Activated CD4-positive, alpha-beta memory T cell treated with anti-CD3 and anti-CD28 coated beads for 36 hours (primary cell): ENCODE measurements at regions of chr20 and their contacts with region 1.

Region 1: GRCh38 chr20:44747166-44748004 is 1.7 kb downstream of the KCNK15 start:
- DNase-seq: peak; percentile 81
- H3K4me3 Mint-ChIP-seq: peak overlapping the region; percentile 67
- H3K27ac Mint-ChIP-seq: no peak overlapping the region
- H3K4me1 Mint-ChIP-seq: peaks cover 11% of the 10 kb centered on the region
- H3K27me3 Mint-ChIP-seq: peaks cover 18% of the 10 kb centered on the region

Region 2: DNA sequence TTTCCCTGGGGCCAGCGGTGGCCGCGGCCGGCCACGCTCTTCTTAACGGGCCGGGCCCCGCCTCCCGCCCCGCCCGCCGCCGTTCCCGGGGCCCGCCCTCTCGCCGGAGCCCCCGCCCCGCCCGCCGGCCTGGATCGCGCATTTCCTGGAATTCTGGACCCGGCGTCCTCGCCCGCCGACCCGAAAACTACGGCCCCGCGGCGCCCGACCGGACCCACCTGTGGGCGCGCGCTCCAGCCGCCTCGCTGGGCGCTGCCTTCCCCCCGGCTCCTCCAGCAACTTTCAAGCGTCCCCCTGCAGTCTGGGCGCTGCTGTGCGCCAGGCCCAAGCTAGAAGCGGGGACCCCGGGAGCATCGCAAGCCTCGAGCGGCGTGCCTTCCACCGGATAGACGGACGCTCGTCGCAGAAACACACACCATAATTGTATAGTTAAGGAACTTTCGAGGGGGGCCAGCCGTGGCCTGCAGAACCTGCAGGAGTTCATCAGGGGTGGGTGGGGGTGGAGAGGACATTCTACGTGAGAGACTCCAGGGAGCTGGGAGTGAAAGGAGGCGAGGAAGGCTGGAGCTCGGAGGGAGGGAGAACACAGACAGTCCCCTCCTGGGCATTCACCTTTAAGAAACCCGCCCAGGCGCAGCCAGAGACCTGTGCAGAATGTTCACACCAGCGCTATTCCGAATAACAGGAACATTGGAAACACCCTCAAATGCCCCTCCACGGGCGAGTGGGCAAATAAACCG is 95.5 kb before region 1 on chr20 and contains the start of gene ADA:
- CTCF ChIA-PET with region 1: no interaction called
- POLR2A ChIA-PET with region 1: no interaction called
- intact Hi-C with region 1: no loop called
- DNase-seq: peak; percentile 53
- H3K4me3 Mint-ChIP-seq: peak within 1 kb of the TSS; percentile 85
- H3K27ac Mint-ChIP-seq: peak within 1 kb of the TSS; percentile 79
- H3K4me1 Mint-ChIP-seq: peaks cover 40% of the 10 kb centered on the region
- H3K27me3 Mint-ChIP-seq: no peaks in the 10 kb centered on the region
- total RNA-seq, gene ADA: 35.7 to 38.0 TPM

Region 3: DNA sequence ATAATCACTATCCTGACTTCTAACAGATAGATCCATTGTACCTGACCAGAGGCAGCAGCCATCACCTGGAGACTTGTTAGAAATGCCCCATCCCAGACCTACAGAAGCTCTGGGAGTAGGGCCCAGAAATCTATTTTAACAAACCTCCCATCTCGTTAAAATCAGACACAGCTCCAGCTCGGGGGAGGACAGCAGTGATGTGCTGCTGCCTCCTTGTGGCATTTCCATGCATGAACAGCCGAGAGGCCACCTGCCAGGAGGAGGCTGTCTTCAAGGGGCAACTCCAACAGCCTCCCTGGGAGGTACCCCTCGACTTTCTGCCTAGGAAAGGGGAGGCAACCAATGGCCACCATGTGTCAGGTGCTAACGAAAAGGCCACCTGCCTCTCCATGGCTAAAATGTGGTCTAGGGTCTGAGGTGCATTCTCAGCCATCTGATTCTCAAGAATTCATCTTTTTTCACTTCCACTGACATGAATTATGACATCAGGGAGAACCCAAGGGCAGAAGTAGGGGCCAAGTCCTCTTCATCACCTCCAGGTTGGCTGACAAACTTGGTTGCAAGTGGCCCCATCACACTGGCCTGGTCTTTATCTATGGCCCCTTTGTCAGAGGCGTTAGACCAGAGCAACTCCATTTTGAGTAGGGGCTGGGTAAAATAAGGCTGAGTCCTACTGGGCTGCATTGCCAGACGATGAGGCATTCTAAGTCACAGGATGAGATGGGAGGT is 13.9 kb before region 1 on chr20:
- CTCF ChIA-PET with region 1: interaction called, 31 read pairs
- POLR2A ChIA-PET with region 1: no interaction called
- intact Hi-C with region 1: no loop called
- DNase-seq: peak; percentile 76
- H3K4me3 Mint-ChIP-seq: no peak overlapping the region
- H3K27ac Mint-ChIP-seq: no peak overlapping the region
- H3K4me1 Mint-ChIP-seq: peaks cover 23% of the 10 kb centered on the region
- H3K27me3 Mint-ChIP-seq: no peaks in the 10 kb centered on the region

Region 4: GRCh38 chr20:44866703-44867335 is 119.4 kb after region 1 on chr20:
- CTCF ChIA-PET with region 1: interaction called, 52 read pairs
- POLR2A ChIA-PET with region 1: no interaction called
- intact Hi-C with region 1: loop called (anchors 1 kb)
- DNase-seq: no peak
- H3K4me3 Mint-ChIP-seq: peak overlapping the region; percentile 39
- H3K27ac Mint-ChIP-seq: no peak overlapping the region
- H3K4me1 Mint-ChIP-seq: peaks cover 11% of the 10 kb centered on the region
- H3K27me3 Mint-ChIP-seq: peaks cover 3% of the 10 kb centered on the region